Sigmoid colon (tissue), 7 donors: ENCODE measurements at regions of chr1 and their contacts with region 1.

Region 1: DNA sequence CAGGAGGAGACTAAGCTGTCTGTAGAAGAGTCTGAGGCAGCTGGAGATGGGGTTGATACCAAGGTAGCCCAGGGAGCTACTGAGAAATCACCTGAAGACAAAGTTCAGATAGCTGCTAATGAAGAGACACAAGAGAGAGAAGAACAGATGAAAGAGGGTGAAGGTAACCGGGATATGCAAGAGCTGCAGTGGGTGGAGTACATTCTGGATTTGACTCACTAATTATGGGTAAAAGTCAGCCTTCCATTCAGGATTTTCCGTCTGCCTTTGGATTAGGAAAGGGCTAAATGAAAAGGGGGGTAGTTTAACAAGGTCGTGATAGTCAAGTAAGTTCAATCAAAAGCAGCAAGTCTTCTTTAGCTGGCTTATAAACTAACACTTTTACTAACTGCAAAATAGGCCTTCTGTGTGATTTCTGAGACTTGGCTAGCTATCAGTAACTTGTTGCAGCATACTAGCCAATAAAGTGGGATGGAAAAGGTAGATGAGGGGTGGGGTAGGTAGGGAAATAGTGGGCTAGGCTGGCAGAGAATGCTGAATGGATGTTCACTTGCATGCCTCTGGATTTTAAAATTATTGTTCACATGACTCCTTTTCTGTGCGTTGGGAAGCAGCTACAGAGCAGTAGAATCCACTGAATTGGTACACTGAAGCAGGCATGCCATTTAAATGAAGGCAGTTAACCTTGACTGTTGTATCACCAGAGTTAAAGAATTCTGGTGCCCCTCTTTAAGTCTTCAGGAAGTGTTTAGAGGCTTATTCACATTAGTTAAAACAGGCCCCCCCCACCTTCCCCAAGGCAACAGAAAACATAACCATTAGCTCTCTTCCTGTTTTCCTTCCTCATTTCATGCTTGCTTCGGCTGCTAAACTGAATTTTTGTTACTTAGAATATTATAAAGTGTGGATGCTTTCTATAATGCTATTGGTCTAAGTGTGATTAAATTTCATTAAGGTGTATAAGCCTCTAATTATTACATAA is 15.4 kb downstream of the CCDC17 start:
- DNase-seq: no peak
- H3K4me3 ChIP-seq: no peak overlapping the region
- H3K27ac ChIP-seq: peak overlapping the region in 1 of 4 donors; percentile 34
- H3K4me1 ChIP-seq: no peaks in the 10 kb centered on the region
- H3K27me3 ChIP-seq: no peaks in the 10 kb centered on the region
- CTCF ChIP-seq: no peak
- EP300 ChIP-seq: no peak
- POLR2A ChIP-seq: no peak

Region 2: DNA sequence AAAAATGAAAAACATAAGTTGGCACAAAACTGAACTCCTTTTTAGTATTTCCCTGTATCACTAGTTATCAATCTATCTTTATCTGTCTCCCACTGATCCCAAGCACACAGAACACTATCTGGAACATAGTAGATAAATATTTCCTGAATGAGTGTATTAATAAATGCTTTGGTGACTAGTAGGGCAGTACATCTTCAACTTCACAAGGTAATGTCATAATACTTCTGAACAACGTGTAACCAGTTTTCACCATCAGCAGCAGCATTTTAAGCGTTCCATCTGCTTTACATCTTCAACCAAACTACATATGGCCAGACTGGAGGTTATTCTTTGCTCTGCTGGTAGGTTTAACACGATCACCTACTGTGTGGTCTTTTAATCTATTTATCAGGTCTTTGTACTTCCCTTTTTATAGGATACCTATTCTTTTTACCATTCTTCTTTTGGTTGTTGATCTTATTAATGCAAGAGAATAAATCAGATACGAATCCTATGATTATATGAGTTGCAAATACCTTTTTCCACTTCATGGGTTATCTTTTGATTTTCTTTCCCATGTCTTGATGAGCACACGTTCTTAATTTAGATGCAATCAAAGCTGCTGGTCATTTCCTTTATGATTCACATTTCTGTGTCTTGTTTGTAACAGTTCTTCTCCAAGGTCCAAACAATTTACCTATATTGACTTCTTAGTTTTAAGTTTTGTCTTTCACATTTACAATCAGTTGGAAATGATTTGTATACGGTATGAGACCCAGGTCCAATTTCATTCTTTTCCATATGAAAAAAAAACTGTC is 61.6 kb after region 1 on chr1:
- intact Hi-C with region 1: loop called (anchors 10 kb)
- DNase-seq: no peak
- H3K4me3 ChIP-seq: no peak overlapping the region
- H3K27ac ChIP-seq: no peak overlapping the region
- H3K4me1 ChIP-seq: peaks cover 0 to 72% (median 39%) of the 10 kb centered on the region in 4 donors
- H3K27me3 ChIP-seq: no peaks in the 10 kb centered on the region
- CTCF ChIP-seq: no peak
- EP300 ChIP-seq: no peak
- POLR2A ChIP-seq: no peak